ENCODE measurements at regions of chr18 and their contacts with region 1.

Region 1: DNA sequence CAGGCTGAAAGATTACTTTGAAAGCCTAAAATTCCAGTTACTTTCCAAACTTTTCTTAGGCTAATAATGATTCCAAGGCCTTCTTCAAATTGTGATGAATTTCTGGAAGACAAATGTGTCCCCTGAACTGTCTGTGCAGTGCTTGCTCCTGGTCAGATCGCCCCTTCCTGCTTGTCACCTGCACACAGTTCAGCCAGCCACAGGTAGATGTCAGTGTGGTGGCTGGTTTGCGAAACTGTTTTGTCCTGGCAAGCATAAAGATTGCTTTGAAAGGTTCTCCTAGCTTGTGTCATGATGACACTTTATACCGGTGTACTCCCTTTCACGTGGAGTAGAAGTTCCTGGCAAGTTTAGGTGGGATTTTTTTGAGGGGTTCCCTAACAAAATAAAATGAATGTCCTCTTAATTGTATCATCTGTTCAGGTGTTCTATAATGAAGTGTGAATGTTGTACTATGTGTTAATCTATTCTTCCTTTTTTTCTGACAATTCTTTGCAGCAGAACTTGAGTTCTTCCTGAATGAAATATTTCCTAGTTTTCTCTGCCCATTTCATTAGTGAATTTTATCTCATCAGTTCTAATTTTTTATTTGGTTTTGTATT is 298.8 kb downstream of the ZNF407 start:
- DNase-seq: peak; percentile 71
- H3K4me3 Mint-ChIP-seq: no peak overlapping the region
- H3K27ac Mint-ChIP-seq: no peak overlapping the region
- H3K4me1 Mint-ChIP-seq: no peaks in the 10 kb centered on the region
- H3K27me3 Mint-ChIP-seq: no peaks in the 10 kb centered on the region
- CTCF ChIP-seq: peak; percentile 67

Region 2: GRCh38 chr18:74652392-74652988 is 244.0 kb before region 1 on chr18:
- CTCF ChIA-PET with region 1: no interaction called
- intact Hi-C with region 1: loop called (anchors 5 kb)
- DNase-seq: peak; percentile 10
- H3K4me3 Mint-ChIP-seq: no peak overlapping the region
- H3K27ac Mint-ChIP-seq: no peak overlapping the region
- H3K4me1 Mint-ChIP-seq: peaks cover 1% of the 10 kb centered on the region
- H3K27me3 Mint-ChIP-seq: no peaks in the 10 kb centered on the region
- CTCF ChIP-seq: no peak

Region 3: GRCh38 chr18:74963820-74964446 is 67.4 kb after region 1 on chr18:
- CTCF ChIA-PET with region 1: interaction called, 14 read pairs
- intact Hi-C with region 1: loop called (anchors 1 kb)
- DNase-seq: peak; percentile 43
- H3K4me3 Mint-ChIP-seq: no peak overlapping the region
- H3K27ac Mint-ChIP-seq: no peak overlapping the region
- H3K4me1 Mint-ChIP-seq: no peaks in the 10 kb centered on the region
- H3K27me3 Mint-ChIP-seq: no peaks in the 10 kb centered on the region
- CTCF ChIP-seq: peak; percentile 60

Region 4: DNA sequence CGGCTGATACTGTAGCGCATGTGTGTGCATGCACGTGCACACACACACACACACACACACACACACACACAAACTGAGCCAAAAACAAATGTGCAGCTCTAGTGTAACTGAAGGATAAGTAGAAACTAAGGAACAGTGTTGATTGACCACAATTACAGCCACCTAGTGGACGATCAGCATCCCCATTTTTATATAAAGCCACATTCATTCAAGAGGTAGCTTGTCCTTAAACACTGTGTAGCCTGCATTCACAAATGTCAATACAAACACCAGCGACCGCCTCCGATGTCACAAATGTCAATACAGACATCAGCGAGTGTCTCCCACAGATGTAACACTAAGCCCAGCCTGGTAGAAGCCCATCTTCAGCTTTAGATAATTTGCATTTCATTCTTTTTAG is 145.1 kb after region 1 on chr18:
- CTCF ChIA-PET with region 1: interaction called, 10 read pairs
- intact Hi-C with region 1: loop called (anchors 1 kb)
- DNase-seq: no peak
- H3K4me3 Mint-ChIP-seq: no peak overlapping the region
- H3K27ac Mint-ChIP-seq: no peak overlapping the region
- H3K4me1 Mint-ChIP-seq: no peaks in the 10 kb centered on the region
- H3K27me3 Mint-ChIP-seq: no peaks in the 10 kb centered on the region
- CTCF ChIP-seq: peak; percentile 40

Region 5: GRCh38 chr18:75210274-75211001 is 313.9 kb after region 1 on chr18 and contains the start of gene TSHZ1:
- CTCF ChIA-PET with region 1: no interaction called
- intact Hi-C with region 1: loop called (anchors 10 kb)
- DNase-seq: peak; percentile 43
- H3K4me3 Mint-ChIP-seq: peak within 1 kb of the TSS; percentile 98
- H3K27ac Mint-ChIP-seq: peak within 1 kb of the TSS; percentile 77
- H3K4me1 Mint-ChIP-seq: peaks cover 51% of the 10 kb centered on the region
- H3K27me3 Mint-ChIP-seq: no peaks in the 10 kb centered on the region
- CTCF ChIP-seq: no peak
- total RNA-seq, gene TSHZ1: 8.6 and 10.8 TPM in 2 replicates

Region 6: GRCh38 chr18:75478996-75479880 is 582.7 kb after region 1 on chr18:
- CTCF ChIA-PET with region 1: no interaction called
- intact Hi-C with region 1: loop called (anchors 1 kb)
- DNase-seq: peak; percentile 13
- H3K4me3 Mint-ChIP-seq: no peak overlapping the region
- H3K27ac Mint-ChIP-seq: no peak overlapping the region
- H3K4me1 Mint-ChIP-seq: no peaks in the 10 kb centered on the region
- H3K27me3 Mint-ChIP-seq: no peaks in the 10 kb centered on the region
- CTCF ChIP-seq: peak; percentile 10

Region 7: DNA sequence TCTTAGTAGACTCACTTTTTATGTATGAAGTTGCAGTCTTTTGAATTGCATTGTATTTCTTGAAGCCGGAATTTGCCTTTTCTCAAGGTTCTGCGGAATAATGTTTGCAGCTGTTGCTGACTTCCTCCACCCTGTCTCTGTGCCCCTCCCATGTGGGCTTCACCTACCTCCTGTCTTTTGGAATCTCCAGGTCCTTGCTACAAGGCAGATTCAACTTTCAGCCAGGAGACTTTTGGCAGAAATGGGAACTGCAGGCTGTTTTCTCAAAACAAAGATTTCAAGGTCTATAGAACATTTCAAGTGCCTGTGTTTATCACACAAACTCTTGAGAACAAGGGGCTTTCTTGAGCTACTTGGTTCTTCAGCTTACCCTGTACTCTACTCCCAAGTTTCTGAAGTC is 1951.4 kb after region 1 on chr18:
- CTCF ChIA-PET with region 1: interaction called, 12 read pairs
- intact Hi-C with region 1: no loop called
- DNase-seq: no peak
- H3K4me3 Mint-ChIP-seq: no peak overlapping the region
- H3K27ac Mint-ChIP-seq: no peak overlapping the region
- H3K4me1 Mint-ChIP-seq: peaks cover 43% of the 10 kb centered on the region
- H3K27me3 Mint-ChIP-seq: no peaks in the 10 kb centered on the region
- CTCF ChIP-seq: no peak

Measured in Calu3 (cell line).